Naive thymus-derived CD4-positive, alpha-beta T cell (primary cell): ENCODE measurements at regions of chr3 and their contacts with region 1.

Region 1: DNA sequence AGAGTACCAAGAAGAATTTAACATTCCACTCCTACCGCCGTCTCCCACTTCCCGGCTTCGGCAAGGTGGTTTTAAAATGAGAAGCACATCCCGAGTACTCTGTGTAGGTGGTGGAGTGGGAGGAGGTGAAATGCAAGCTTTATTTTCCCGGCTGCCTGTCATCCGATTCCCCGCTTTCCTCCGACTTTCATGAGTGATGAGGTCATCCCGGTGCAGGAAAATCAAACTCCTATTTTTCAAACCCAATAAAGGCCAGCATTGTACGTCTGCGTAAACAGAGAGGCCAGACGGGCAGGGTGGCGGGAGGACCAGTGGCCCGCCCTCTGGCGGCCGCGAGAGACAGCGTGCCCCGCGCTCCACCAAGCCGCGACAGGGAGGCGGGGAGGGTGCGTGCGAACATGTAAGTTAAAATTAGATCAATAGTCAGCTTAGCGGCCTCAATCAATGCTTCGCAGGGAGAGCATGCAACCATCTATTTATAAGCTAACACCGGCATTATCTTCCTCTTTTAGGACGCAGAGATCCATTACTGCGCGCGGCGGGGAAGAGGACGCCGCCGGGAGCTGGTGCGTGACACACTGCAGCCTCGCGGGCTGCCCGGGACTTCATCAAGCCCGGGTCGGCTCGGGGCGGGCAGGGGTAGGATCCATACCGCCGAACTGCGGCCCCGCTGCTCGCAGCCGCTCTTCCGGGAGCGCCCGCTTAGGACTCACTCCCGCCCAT is 163.3 kb downstream of the CD47 start:
- DNase-seq: peak; percentile 39 to 71 (median 57)
- ATAC-seq: peak; percentile 92
- H3K4me3 ChIP-seq: peak overlapping the region; percentile 60
- H3K4me3 Mint-ChIP-seq: peak overlapping the region; percentile 86 to 93 (median 89)
- H3K27ac ChIP-seq: no peak overlapping the region
- H3K27ac Mint-ChIP-seq: peak overlapping the region in 5 of 9 donors; percentile 26 to 88 (median 64)
- H3K4me1 ChIP-seq: peaks cover 5 to 6% of the 10 kb centered on the region in 2 donors
- H3K4me1 Mint-ChIP-seq: peaks cover 9 to 15% (median 13%) of the 10 kb centered on the region in 7 donors
- H3K27me3 ChIP-seq: peaks cover 0 to under 1% of the 10 kb centered on the region in 2 donors
- H3K27me3 Mint-ChIP-seq: peaks cover 0 to 17% (median 4%) of the 10 kb centered on the region in 5 donors

Region 2: DNA sequence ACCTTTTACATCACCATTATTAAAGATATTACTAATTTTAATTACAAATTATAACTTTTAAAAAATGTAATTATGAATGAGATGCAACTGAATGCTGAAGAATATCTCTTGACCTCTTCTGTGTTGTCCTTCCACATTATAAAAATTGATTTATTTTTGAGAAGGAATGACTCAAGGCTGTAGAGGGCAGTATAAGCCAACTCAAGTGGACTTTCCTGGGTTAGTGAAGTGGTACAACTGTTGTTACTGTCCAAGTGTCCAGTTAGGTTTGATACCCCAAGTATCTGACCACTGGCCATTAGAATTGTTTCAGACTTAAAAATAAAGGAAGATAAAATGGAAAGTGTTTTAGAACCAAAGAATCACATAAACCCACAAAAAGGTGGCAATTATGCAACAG is 352.9 kb before region 1 on chr3:
- CTCF ChIA-PET with region 1: no interaction called
- POLR2A ChIA-PET with region 1: no interaction called
- intact Hi-C with region 1: loop called (anchors 1 kb)
- DNase-seq: peak in 1 of 9 donors; percentile 5
- ATAC-seq: peak; percentile 63
- H3K4me3 ChIP-seq: no peak overlapping the region
- H3K4me3 Mint-ChIP-seq: no peak overlapping the region
- H3K27ac ChIP-seq: no peak overlapping the region
- H3K27ac Mint-ChIP-seq: no peak overlapping the region
- H3K4me1 ChIP-seq: peaks cover 0 to 9% of the 10 kb centered on the region in 2 donors
- H3K4me1 Mint-ChIP-seq: peaks cover 10 to 61% (median 51%) of the 10 kb centered on the region in 7 donors
- H3K27me3 ChIP-seq: no peaks in the 10 kb centered on the region
- H3K27me3 Mint-ChIP-seq: no peaks in the 10 kb centered on the region

Region 3: GRCh38 chr3:107660306-107660976 is 267.1 kb before region 1 on chr3:
- CTCF ChIA-PET with region 1: interaction called, 10 read pairs
- POLR2A ChIA-PET with region 1: no interaction called
- intact Hi-C with region 1: loop called (anchors 1 to 5 kb)
- DNase-seq: peak in 6 of 9 donors; percentile 11 to 43 (median 34)
- ATAC-seq: peak; percentile 67
- H3K4me3 ChIP-seq: no peak overlapping the region
- H3K4me3 Mint-ChIP-seq: no peak overlapping the region
- H3K27ac ChIP-seq: no peak overlapping the region
- H3K27ac Mint-ChIP-seq: no peak overlapping the region
- H3K4me1 ChIP-seq: peaks cover 0 to 13% of the 10 kb centered on the region in 2 donors
- H3K4me1 Mint-ChIP-seq: peaks cover 15 to 45% (median 31%) of the 10 kb centered on the region in 7 donors
- H3K27me3 ChIP-seq: no peaks in the 10 kb centered on the region
- H3K27me3 Mint-ChIP-seq: no peaks in the 10 kb centered on the region

Region 4: GRCh38 chr3:107846279-107846852 is 81.2 kb before region 1 on chr3:
- CTCF ChIA-PET with region 1: no interaction called
- POLR2A ChIA-PET with region 1: no interaction called
- intact Hi-C with region 1: no loop called
- DNase-seq: peak in 5 of 9 donors; percentile 2 to 20 (median 6)
- ATAC-seq: no peak
- H3K4me3 ChIP-seq: no peak overlapping the region
- H3K4me3 Mint-ChIP-seq: no peak overlapping the region
- H3K27ac ChIP-seq: no peak overlapping the region
- H3K27ac Mint-ChIP-seq: no peak overlapping the region
- H3K4me1 ChIP-seq: no peaks in the 10 kb centered on the region
- H3K4me1 Mint-ChIP-seq: no peaks in the 10 kb centered on the region
- H3K27me3 ChIP-seq: no peaks in the 10 kb centered on the region
- H3K27me3 Mint-ChIP-seq: peaks cover 0 to 13% (median 0%) of the 10 kb centered on the region in 5 donors

Region 5: GRCh38 chr3:107978131-107979055 is 50.9 kb after region 1 on chr3:
- CTCF ChIA-PET with region 1: interaction called, 3 read pairs
- POLR2A ChIA-PET with region 1: no interaction called
- intact Hi-C with region 1: loop called in 1 of 2 experiments (anchors 5 kb)
- DNase-seq: peak in 5 of 9 donors; percentile 18 to 35 (median 20)
- ATAC-seq: no peak
- H3K4me3 ChIP-seq: peak overlapping the region; percentile 23
- H3K4me3 Mint-ChIP-seq: peak overlapping the region; percentile 26 to 84 (median 70)
- H3K27ac ChIP-seq: no peak overlapping the region
- H3K27ac Mint-ChIP-seq: peak overlapping the region in 5 of 9 donors; percentile 19 to 76 (median 67)
- H3K4me1 ChIP-seq: peaks cover 43 to 49% of the 10 kb centered on the region in 2 donors
- H3K4me1 Mint-ChIP-seq: peaks cover 34 to 83% (median 72%) of the 10 kb centered on the region in 7 donors
- H3K27me3 ChIP-seq: no peaks in the 10 kb centered on the region
- H3K27me3 Mint-ChIP-seq: peaks cover 0 to 16% (median 0%) of the 10 kb centered on the region in 5 donors

Region 6: GRCh38 chr3:108036984-108037741 is 109.6 kb after region 1 on chr3:
- CTCF ChIA-PET with region 1: no interaction called
- POLR2A ChIA-PET with region 1: no interaction called
- intact Hi-C with region 1: loop called in 1 of 2 experiments (anchors 5 kb)
- DNase-seq: no peak
- ATAC-seq: peak; percentile 46
- H3K4me3 ChIP-seq: no peak overlapping the region
- H3K4me3 Mint-ChIP-seq: no peak overlapping the region
- H3K27ac ChIP-seq: no peak overlapping the region
- H3K27ac Mint-ChIP-seq: peak overlapping the region in 5 of 9 donors; percentile 5 to 85 (median 22)
- H3K4me1 ChIP-seq: no peaks in the 10 kb centered on the region
- H3K4me1 Mint-ChIP-seq: peaks cover 10 to 34% (median 23%) of the 10 kb centered on the region in 7 donors
- H3K27me3 ChIP-seq: no peaks in the 10 kb centered on the region
- H3K27me3 Mint-ChIP-seq: no peaks in the 10 kb centered on the region

Region 7: DNA sequence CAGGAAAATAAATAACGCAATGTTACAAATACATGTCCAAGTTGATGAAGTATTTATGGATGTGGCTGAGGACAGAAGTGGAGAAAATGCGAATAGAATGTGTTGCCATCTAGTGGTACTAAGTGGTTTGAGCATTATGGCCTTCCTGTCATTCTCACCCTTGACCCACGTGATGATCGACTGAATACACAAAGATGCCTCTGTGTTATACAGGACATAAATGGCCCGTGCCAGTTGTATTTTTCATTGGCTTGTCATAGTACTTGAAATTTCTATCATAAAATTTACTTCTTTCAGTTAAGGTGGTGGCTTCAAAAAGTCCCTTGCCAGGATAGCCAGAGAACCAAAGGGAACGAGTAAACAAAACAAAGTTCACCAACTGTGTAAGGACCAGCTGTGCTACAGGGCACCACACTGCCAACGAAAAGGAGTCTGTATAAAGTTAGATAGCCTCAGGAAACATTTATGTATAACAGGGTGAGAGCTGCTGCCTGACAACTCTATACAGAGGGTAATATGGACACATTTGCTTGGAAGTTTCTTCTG is 479.2 kb after region 1 on chr3:
- CTCF ChIA-PET with region 1: interaction called, 6 read pairs
- POLR2A ChIA-PET with region 1: no interaction called
- intact Hi-C with region 1: loop called (anchors 1 to 10 kb)
- DNase-seq: peak in 4 of 9 donors; percentile 18 to 57 (median 50)
- ATAC-seq: peak; percentile 82
- H3K4me3 ChIP-seq: no peak overlapping the region
- H3K4me3 Mint-ChIP-seq: no peak overlapping the region
- H3K27ac ChIP-seq: no peak overlapping the region
- H3K27ac Mint-ChIP-seq: peak overlapping the region in 1 of 9 donors; percentile 2
- H3K4me1 ChIP-seq: no peaks in the 10 kb centered on the region
- H3K4me1 Mint-ChIP-seq: peaks cover 0 to 6% (median 2%) of the 10 kb centered on the region in 7 donors
- H3K27me3 ChIP-seq: no peaks in the 10 kb centered on the region
- H3K27me3 Mint-ChIP-seq: peaks cover 0 to 6% (median 0%) of the 10 kb centered on the region in 5 donors

Region 8: DNA sequence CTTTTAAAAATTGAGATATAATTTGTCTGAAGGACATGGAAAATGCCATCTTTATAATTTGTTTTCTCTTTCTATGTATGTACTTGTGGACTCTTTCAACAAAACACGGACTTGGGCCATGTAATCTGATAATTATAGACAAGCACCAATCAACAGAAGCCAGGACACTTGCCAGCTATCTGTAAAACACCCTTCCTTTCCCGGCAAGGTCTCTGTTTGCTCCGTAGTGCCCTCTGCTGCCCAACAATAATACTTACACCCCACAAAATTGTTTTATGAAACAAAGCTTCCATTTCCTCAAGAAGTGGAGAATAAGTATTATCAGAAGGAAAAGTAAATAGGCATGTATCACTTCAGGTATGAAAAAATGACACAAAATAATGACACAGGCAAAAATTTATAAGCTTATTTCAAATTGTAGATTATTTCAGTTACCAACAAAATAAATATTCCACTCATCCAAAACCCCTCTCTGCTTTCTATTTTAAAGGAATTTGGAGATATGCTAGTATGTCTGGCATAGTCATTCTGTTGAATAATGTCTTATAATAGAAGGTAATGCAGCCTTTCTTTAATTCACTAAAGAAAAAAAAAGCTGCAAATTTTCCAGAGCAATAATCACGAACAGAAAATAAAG is 550.1 kb after region 1 on chr3:
- CTCF ChIA-PET with region 1: interaction called, 6 read pairs
- POLR2A ChIA-PET with region 1: no interaction called
- intact Hi-C with region 1: loop called in 1 of 2 experiments (anchors 5 kb)
- DNase-seq: peak; percentile 17 to 65 (median 51)
- ATAC-seq: peak; percentile 91
- H3K4me3 ChIP-seq: no peak overlapping the region
- H3K4me3 Mint-ChIP-seq: no peak overlapping the region
- H3K27ac ChIP-seq: no peak overlapping the region
- H3K27ac Mint-ChIP-seq: no peak overlapping the region
- H3K4me1 ChIP-seq: no peaks in the 10 kb centered on the region
- H3K4me1 Mint-ChIP-seq: peaks cover 0 to 7% (median 0%) of the 10 kb centered on the region in 7 donors
- H3K27me3 ChIP-seq: no peaks in the 10 kb centered on the region
- H3K27me3 Mint-ChIP-seq: peaks cover 0 to 17% (median 3%) of the 10 kb centered on the region in 5 donors